ENCODE measurements at regions of chr3 and their contacts with region 1.

Region 1: GRCh38 chr3:143775459-143775858 is 72.8 kb downstream of the SLC9A9 start:
- DNase-seq: peak in 6 of 9 donors; percentile 23 to 58 (median 46)
- ATAC-seq: peak; percentile 86
- H3K4me3 ChIP-seq: no peak overlapping the region
- H3K4me3 Mint-ChIP-seq: peak overlapping the region in 1 of 10 donors; percentile 38
- H3K27ac ChIP-seq: no peak overlapping the region
- H3K27ac Mint-ChIP-seq: no peak overlapping the region
- H3K4me1 ChIP-seq: no peaks in the 10 kb centered on the region
- H3K4me1 Mint-ChIP-seq: peaks cover 0 to 6% (median 3%) of the 10 kb centered on the region in 7 donors
- H3K27me3 ChIP-seq: no peaks in the 10 kb centered on the region
- H3K27me3 Mint-ChIP-seq: no peaks in the 10 kb centered on the region

Region 2: GRCh38 chr3:143885780-143886427 is 110.4 kb after region 1 on chr3:
- CTCF ChIA-PET with region 1: interaction called, 3 read pairs
- POLR2A ChIA-PET with region 1: no interaction called
- intact Hi-C with region 1: loop called in 1 of 2 experiments (anchors 1 kb)
- DNase-seq: peak in 5 of 9 donors; percentile 12 to 30 (median 29)
- ATAC-seq: peak; percentile 85
- H3K4me3 ChIP-seq: no peak overlapping the region
- H3K4me3 Mint-ChIP-seq: no peak overlapping the region
- H3K27ac ChIP-seq: no peak overlapping the region
- H3K27ac Mint-ChIP-seq: no peak overlapping the region
- H3K4me1 ChIP-seq: no peaks in the 10 kb centered on the region
- H3K4me1 Mint-ChIP-seq: no peaks in the 10 kb centered on the region
- H3K27me3 ChIP-seq: no peaks in the 10 kb centered on the region
- H3K27me3 Mint-ChIP-seq: peaks cover 0 to 20% (median 0%) of the 10 kb centered on the region in 5 donors

Measured in naive thymus-derived CD4-positive, alpha-beta T cell (primary cell).